ENCODE measurements at regions of chr20 and their contacts with region 1.

Region 1: DNA sequence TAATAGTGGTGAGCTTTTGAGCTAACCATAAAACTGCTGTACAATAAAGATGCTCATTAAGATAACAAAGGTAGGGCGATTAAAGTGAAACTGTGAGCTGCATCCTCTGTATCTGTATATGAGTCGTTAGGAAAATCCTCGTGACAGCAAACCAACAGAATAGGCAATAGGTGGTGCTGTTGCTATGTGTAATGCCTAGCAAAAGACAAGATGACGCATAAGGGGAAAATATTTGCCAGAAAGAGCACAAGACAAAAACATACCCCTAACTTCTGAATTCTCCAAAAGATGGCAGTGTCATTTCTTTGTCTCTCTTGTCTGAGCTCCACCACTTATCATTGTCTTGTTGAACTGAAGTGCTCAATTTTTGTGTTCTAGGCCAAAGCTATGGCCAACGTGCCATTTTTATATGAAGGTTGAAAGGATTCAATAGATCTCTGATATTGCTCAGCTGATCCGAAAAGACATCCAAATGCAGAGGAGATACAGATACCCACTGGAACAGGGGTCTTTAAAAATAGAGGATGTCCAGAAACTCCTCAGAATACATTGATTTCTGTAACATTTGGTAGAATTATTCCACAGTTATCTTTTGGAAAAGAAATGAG is 56.3 kb upstream of the ANKEF1 start:
- DNase-seq: peak; percentile 63
- H3K4me3 ChIP-seq: no peak overlapping the region
- H3K27ac ChIP-seq: no peak overlapping the region
- H3K4me1 ChIP-seq: no peaks in the 10 kb centered on the region
- H3K27me3 ChIP-seq: no peaks in the 10 kb centered on the region
- CTCF ChIP-seq: peak; percentile 37 to 87 (median 70)
- POLR2A ChIP-seq: no peak

Region 2: DNA sequence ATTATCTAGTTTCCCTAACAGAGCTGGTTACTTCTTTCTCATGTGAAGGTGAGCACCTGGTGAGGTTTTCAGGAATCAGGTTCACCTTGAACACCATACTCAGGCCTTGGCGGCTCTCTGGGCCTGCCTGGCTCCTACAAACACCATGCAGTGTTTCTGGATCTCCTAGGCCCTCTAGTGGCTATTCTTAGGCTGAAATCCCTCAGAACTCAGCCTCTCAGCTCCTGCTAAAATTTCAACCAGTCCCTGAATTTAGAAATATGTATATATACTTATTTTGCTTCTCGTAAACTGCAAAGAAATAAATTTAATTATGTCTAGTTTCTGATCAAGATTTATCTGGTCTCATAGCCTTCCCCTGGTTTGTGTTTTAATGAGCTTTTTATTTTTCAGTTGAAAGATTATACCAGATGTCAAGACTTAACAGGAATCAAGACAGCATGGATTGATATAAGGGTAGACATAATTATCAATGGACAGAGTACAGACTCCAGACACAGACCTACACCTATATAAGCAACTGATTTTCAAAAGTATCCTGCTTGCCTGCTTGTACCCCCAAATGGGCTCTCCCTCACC is 112.2 kb after region 1 on chr20:
- intact Hi-C with region 1: loop called (anchors 5 kb)
- DNase-seq: peak; percentile 38
- H3K4me3 ChIP-seq: no peak overlapping the region
- H3K27ac ChIP-seq: no peak overlapping the region
- H3K4me1 ChIP-seq: no peaks in the 10 kb centered on the region
- H3K27me3 ChIP-seq: no peaks in the 10 kb centered on the region
- CTCF ChIP-seq: peak; percentile 44 to 68 (median 58)
- POLR2A ChIP-seq: no peak